Mammary epithelial cell (primary cell): ENCODE measurements at regions of chr4 and their contacts with region 1.

Region 1: DNA sequence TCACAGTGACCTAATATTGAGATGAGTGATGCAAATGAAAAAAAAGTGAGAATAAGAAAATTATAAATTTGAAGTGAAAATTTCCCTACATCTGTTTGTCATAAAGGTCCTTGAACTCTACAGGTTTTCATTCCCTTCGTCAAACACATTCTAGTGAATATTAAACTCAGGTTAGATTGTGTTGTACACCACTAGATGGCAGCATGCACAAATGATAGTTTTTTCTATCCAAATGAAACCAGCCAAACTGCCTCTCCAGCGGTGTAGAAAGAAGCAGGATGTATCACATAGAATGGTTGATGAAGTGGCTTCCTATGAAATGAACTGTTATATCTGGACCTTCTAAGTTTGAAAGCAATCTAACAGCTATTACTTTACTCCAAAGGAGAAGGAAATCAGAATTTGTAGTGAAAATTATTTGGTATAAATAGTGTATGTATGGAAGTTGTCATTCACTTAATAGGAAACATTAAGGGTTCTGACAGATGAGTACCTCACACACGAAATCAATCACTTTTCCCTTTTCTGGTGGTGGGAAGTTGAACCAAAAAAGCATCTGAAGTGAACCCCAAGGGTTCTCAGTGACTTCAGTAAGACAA is 382.7 kb downstream of the UNC5C start:
- DNase-seq: peak; percentile 54
- H3K4me3 ChIP-seq: no peak overlapping the region
- H3K27ac ChIP-seq: no peak overlapping the region
- H3K4me1 ChIP-seq: no peaks in the 10 kb centered on the region
- H3K27me3 ChIP-seq: no peaks in the 10 kb centered on the region
- CTCF ChIP-seq: peak; percentile 39 to 65

Region 2: GRCh38 chr4:95544113-95545103 is 378.4 kb after region 1 on chr4:
- CTCF ChIA-PET with region 1: no interaction called
- dilution Hi-C with region 1: no loop called
- in situ Hi-C with region 1: no loop called
- intact Hi-C with region 1: loop called (anchors 1 kb)
- DNase-seq: peak; percentile 51
- H3K4me3 ChIP-seq: peak overlapping the region in 1 of 3 experiments; percentile 51
- H3K27ac ChIP-seq: peak overlapping the region; percentile 15
- H3K4me1 ChIP-seq: peaks cover 1% of the 10 kb centered on the region
- H3K27me3 ChIP-seq: peaks cover 19% of the 10 kb centered on the region
- CTCF ChIP-seq: peak; percentile 11 to 45

Region 3: GRCh38 chr4:96035727-96036126 is 869.7 kb after region 1 on chr4:
- CTCF ChIA-PET with region 1: no interaction called
- dilution Hi-C with region 1: no loop called
- in situ Hi-C with region 1: loop called in 1 of 2 experiments (anchors 25 kb)
- intact Hi-C with region 1: loop called (anchors 5 kb)
- DNase-seq: peak; percentile 39
- H3K4me3 ChIP-seq: no peak overlapping the region
- H3K27ac ChIP-seq: no peak overlapping the region
- H3K4me1 ChIP-seq: no peaks in the 10 kb centered on the region
- H3K27me3 ChIP-seq: no peaks in the 10 kb centered on the region
- CTCF ChIP-seq: peak; percentile 43 to 70

Region 4: DNA sequence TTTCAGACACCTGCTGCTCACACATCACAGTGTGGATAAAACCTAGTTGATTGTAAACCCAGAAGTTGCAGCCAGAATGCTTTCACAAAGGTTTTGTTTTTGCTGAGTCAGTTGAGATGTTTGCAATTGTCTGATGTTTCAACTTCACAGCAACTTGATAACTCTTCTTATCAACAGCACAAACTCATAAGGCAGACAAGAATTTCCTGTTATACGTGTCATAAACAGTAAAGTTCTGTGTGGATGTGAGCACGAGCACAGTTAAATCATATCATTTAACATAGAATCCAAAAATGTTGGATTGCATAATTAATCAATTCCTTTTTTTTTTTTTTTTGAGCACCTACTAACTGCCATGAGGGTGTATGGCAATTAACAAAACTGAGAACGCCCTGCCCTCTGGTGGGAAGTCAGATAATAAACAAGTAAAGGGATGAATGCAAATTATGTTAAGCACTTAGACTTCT is 1186.1 kb after region 1 on chr4:
- CTCF ChIA-PET with region 1: no interaction called
- dilution Hi-C with region 1: no loop called
- in situ Hi-C with region 1: loop called in 1 of 2 experiments (anchors 25 kb)
- intact Hi-C with region 1: no loop called
- DNase-seq: peak; percentile 14
- H3K4me3 ChIP-seq: no peak overlapping the region
- H3K27ac ChIP-seq: no peak overlapping the region
- H3K4me1 ChIP-seq: peaks cover 6% of the 10 kb centered on the region
- H3K27me3 ChIP-seq: peaks cover 2% of the 10 kb centered on the region
- CTCF ChIP-seq: peak; percentile 14 to 50